ENCODE measurements at regions of chr11 and their contacts with region 1.

Region 1: GRCh38 chr11:13955971-13956421 is 6.5 kb upstream of the SPON1 start:
- DNase-seq: peak in 1 of 2 experiments; percentile 63
- H3K4me3 ChIP-seq: no peak overlapping the region
- H3K27ac ChIP-seq: no peak overlapping the region
- H3K4me1 ChIP-seq: peaks cover 0 to 7% (median 4%) of the 10 kb centered on the region in 4 experiments; a peak in 6 of 7 replicates
- H3K27me3 ChIP-seq: peaks cover under 1 to 15% (median 7%) of the 10 kb centered on the region in 4 experiments
- CTCF ChIP-seq: peak; percentile 59 to 82 (median 81)
- EP300 ChIP-seq: no peak
- POLR2A ChIP-seq: no peak
- RAD21 ChIP-seq: peak; percentile 91 to 93

Region 2: GRCh38 chr11:13772223-13773046 is 183.6 kb before region 1 on chr11:
- CTCF ChIA-PET with region 1: interaction called, 41 read pairs
- POLR2A ChIA-PET with region 1: no interaction called
- DNase-seq: peak; percentile 31 to 55
- H3K4me3 ChIP-seq: no peak overlapping the region
- H3K27ac ChIP-seq: no peak overlapping the region
- H3K4me1 ChIP-seq: peaks cover 0 to 4% (median under 1%) of the 10 kb centered on the region in 4 experiments; a peak in 3 of 7 replicates
- H3K27me3 ChIP-seq: no peaks in the 10 kb centered on the region
- CTCF ChIP-seq: peak; percentile 1 to 68 (median 48)
- EP300 ChIP-seq: no peak
- POLR2A ChIP-seq: no peak
- RAD21 ChIP-seq: peak; percentile 85 to 88

Region 3: GRCh38 chr11:13942983-13943382 is 13.0 kb before region 1 on chr11:
- CTCF ChIA-PET with region 1: interaction called, 51 read pairs
- POLR2A ChIA-PET with region 1: no interaction called
- DNase-seq: no peak
- H3K4me3 ChIP-seq: no peak overlapping the region
- H3K27ac ChIP-seq: no peak overlapping the region
- H3K4me1 ChIP-seq: no peaks in the 10 kb centered on the region
- H3K27me3 ChIP-seq: no peaks in the 10 kb centered on the region
- CTCF ChIP-seq: no peak
- EP300 ChIP-seq: no peak
- POLR2A ChIP-seq: no peak
- RAD21 ChIP-seq: no peak

Region 4: GRCh38 chr11:14029440-14029839 is 73.4 kb after region 1 on chr11:
- CTCF ChIA-PET with region 1: no interaction called
- POLR2A ChIA-PET with region 1: no interaction called
- DNase-seq: no peak
- H3K4me3 ChIP-seq: no peak overlapping the region
- H3K27ac ChIP-seq: no peak overlapping the region
- H3K4me1 ChIP-seq: peaks cover 0 to 4% (median 0%) of the 10 kb centered on the region in 4 experiments; a peak in 1 of 7 replicates
- H3K27me3 ChIP-seq: no peaks in the 10 kb centered on the region
- CTCF ChIP-seq: no peak
- EP300 ChIP-seq: no peak
- POLR2A ChIP-seq: no peak
- RAD21 ChIP-seq: no peak

Region 5: DNA sequence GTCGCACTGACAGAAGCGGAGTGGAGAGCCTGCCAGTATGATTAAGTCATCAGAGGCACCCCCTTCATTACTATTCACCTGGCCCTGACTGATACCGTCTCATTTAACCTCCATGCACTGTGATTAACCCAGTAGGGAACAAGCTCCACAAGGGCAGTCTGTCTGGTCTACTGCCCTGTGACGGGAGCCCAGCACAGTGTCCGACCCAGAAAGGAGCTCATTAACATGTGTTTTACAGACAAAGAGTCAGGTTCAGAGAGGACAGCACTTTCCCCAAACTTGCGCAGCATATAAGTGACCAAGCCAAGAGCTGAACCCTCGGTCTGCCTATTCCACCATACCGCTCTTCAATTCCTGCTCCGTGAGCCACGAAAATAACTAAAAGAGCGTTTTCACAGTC is 273.5 kb after region 1 on chr11:
- CTCF ChIA-PET with region 1: interaction called, 13 read pairs
- POLR2A ChIA-PET with region 1: interaction called, 3 read pairs
- DNase-seq: no peak
- H3K4me3 ChIP-seq: peak overlapping the region in 2 of 4 experiments; percentile 22 to 48; a peak in 4 of 8 replicates
- H3K27ac ChIP-seq: 0 out of 2 replicates have a peak overlapping the region, but pooled peaks have one; percentile 21
- H3K4me1 ChIP-seq: peaks cover 2 to 22% (median 15%) of the 10 kb centered on the region in 4 experiments
- H3K27me3 ChIP-seq: no peaks in the 10 kb centered on the region; a peak in 1 of 7 replicates
- CTCF ChIP-seq: no peak
- EP300 ChIP-seq: no peak
- POLR2A ChIP-seq: no peak
- RAD21 ChIP-seq: no peak

Region 6: DNA sequence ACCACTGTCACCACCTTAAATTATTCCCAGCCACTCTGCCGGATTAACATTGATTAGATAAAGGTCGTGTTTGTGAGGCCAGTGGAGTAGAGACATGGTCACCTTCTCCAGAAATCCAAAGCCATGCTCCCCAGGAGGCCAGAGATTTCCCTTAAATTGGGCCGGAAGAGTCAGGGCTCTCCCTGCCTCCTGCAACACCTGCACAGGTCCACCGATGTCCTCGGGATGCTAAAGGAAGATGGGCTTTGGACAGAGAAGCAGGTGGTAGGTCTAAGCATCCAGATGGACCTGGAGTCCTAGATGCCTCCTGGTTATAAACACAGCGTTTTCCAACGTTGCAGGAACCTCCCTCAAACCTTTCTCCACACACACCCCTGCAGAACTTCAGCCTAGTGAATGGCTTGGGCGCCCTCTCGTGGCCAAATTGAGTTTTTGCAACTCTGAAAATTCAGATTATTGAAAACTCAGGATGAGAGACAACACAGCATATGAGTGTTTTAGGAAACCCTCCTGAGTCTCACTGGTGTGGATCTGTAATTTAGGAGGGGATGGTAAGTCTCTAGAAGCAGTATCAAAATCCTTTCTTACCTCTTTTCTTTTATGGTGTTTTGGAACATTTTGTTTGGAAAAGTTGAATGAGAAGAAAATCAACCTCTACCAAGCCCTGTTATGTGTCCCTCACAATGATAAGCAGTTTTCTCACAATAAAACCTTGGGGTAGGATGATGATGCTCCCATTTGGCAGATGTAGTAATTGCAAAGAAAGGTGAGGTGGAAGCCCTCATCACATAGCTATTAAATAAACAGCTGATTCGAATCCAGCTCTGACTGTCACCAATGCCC is 293.3 kb after region 1 on chr11:
- CTCF ChIA-PET with region 1: interaction called, 43 read pairs
- POLR2A ChIA-PET with region 1: no interaction called
- DNase-seq: peak in 1 of 2 experiments; percentile 80
- H3K4me3 ChIP-seq: no peak overlapping the region
- H3K27ac ChIP-seq: no peak overlapping the region
- H3K4me1 ChIP-seq: peaks cover 0 to 6% (median 5%) of the 10 kb centered on the region in 4 experiments; a peak in 4 of 7 replicates
- H3K27me3 ChIP-seq: no peaks in the 10 kb centered on the region
- CTCF ChIP-seq: peak; percentile 42 to 91 (median 88)
- EP300 ChIP-seq: no peak
- POLR2A ChIP-seq: no peak
- RAD21 ChIP-seq: peak; percentile 99 to 100

Measured in H1 (cell line).